ENCODE measurements at regions of chr20 and their contacts with region 1.

Region 1: GRCh38 chr20:47432211-47433210 is 69.2 kb upstream of the NCOA3 start:
- DNase-seq: no peak
- CTCF ChIP-seq: no peak

Region 2: GRCh38 chr20:47411161-47411560 is 21.4 kb before region 1 on chr20:
- CTCF ChIA-PET with region 1: interaction called, 16 read pairs
- POLR2A ChIA-PET with region 1: interaction called, 4 read pairs
- DNase-seq: no peak
- CTCF ChIP-seq: no peak

Region 3: GRCh38 chr20:47418061-47418912 is 14.2 kb before region 1 on chr20:
- CTCF ChIA-PET with region 1: interaction called, 16 read pairs
- POLR2A ChIA-PET with region 1: interaction called, 4 read pairs
- DNase-seq: no peak
- CTCF ChIP-seq: no peak